Left ventricle myocardium inferior (tissue), 1 donor: ENCODE measurements at regions of chr17 and their contacts with region 1.

Region 1: GRCh38 chr17:80981062-80981902 is 10.4 kb upstream of the CHMP6 start:
- DNase-seq: no peak
- H3K4me3 ChIP-seq: peak overlapping the region; percentile 23
- H3K27ac ChIP-seq: no peak overlapping the region
- H3K4me1 ChIP-seq: peaks cover 26% of the 10 kb centered on the region
- H3K27me3 ChIP-seq: peaks cover 41% of the 10 kb centered on the region
- CTCF ChIP-seq: peak; percentile 85

Region 2: GRCh38 chr17:80426681-80427326 is 554.5 kb before region 1 on chr17:
- intact Hi-C with region 1: loop called (anchors 10 kb)
- DNase-seq: peak; percentile 66
- H3K4me3 ChIP-seq: no peak overlapping the region
- H3K27ac ChIP-seq: no peak overlapping the region
- H3K4me1 ChIP-seq: peaks cover 20% of the 10 kb centered on the region
- H3K27me3 ChIP-seq: no peaks in the 10 kb centered on the region
- CTCF ChIP-seq: peak; percentile 98

Region 3: GRCh38 chr17:80927791-80928216 is 53.5 kb before region 1 on chr17:
- intact Hi-C with region 1: no loop called
- DNase-seq: no peak
- H3K4me3 ChIP-seq: no peak overlapping the region
- H3K27ac ChIP-seq: no peak overlapping the region
- H3K4me1 ChIP-seq: peaks cover 16% of the 10 kb centered on the region
- H3K27me3 ChIP-seq: no peaks in the 10 kb centered on the region
- CTCF ChIP-seq: peak; percentile 39